ENCODE measurements at regions of chr2 and their contacts with region 1.

Region 1: DNA sequence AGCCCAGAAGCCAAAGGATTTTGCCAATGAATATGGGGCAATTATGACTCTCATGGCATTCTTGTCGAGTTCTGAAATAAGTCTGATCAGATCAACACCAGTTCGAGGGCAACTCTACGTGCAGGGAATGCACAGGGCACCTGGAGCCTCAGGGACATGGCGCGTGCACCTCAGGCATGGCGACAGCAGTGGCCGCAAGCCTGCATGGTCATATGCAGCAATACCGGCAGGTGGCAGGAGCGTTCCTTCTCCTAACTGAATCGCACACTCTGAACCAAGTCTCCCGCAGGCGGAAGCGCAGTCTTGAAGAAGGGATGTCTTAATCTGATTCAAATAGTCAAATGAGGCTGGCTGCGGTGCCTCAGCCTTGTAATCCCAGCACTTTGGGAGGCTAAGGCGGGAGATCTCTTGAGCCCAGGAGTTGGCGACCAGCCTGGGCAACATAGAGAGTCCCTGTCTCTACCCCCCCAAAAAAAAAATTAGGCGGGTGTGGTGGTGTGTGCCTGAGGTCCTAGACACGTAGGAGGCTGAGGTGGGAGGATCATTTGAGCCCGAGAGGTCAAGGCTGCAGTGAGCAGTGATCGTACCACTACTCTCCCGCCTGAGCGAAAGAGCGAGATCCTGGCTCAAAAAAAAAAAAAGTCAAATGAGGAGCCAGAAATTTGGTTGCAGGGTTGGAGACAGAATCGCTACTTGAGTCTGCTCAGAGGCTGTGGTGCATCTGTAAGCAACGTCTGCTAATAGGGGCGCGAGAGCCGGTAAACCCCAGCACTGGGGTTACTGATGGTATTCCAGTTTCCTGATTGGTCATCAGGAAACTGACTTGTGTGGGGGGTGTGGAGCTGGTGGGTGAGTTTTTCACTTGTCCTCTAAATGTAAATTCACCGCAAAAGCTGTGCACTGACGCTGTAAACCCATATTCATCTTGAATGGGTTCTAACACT is 28.8 kb downstream of the FHL2 start:
- DNase-seq: peak; percentile 93
- H3K4me3 ChIP-seq: no peak overlapping the region
- H3K27ac ChIP-seq: no peak overlapping the region
- H3K4me1 ChIP-seq: peaks cover 0 to 39% (median 28%) of the 10 kb centered on the region in 4 donors
- H3K27me3 ChIP-seq: no peaks in the 10 kb centered on the region
- CTCF ChIP-seq: peak; percentile 87 to 96 (median 90)
- EP300 ChIP-seq: no peak
- POLR2A ChIP-seq: no peak

Region 2: DNA sequence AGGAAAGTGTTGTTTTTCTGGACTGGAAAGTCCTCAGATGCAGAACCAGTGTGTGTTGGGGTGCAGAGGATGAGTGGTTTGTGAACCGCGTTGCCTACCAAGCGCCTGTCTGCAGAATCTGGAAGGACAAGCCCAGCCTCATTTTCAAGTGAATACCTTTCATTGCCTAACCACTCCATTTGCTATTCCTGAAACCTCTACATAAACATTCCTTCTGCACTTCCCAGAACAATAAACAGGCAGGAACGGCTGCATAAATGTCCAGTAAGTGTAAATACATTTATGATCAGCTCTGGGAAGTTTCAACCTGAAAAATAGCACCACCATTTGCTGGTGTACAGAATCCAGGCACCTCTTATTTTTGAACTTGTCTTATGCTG is 74.2 kb after region 1 on chr2:
- intact Hi-C with region 1: loop called (anchors 5 kb)
- DNase-seq: no peak
- H3K4me3 ChIP-seq: no peak overlapping the region
- H3K27ac ChIP-seq: peak overlapping the region in 2 of 4 donors; percentile 30 to 51
- H3K4me1 ChIP-seq: peaks cover 0 to 28% (median 17%) of the 10 kb centered on the region in 4 donors
- H3K27me3 ChIP-seq: peaks cover 0 to 9% (median 0%) of the 10 kb centered on the region in 3 donors
- CTCF ChIP-seq: peak in 3 of 4 experiments; percentile 14 to 36 (median 16)
- EP300 ChIP-seq: peak; percentile 64 to 92 (median 76)
- POLR2A ChIP-seq: no peak

Region 3: GRCh38 chr2:105521205-105521604 is 151.2 kb after region 1 on chr2:
- intact Hi-C with region 1: loop called (anchors 1 kb)
- DNase-seq: no peak
- H3K4me3 ChIP-seq: no peak overlapping the region
- H3K27ac ChIP-seq: no peak overlapping the region
- H3K4me1 ChIP-seq: peaks cover 0 to 15% (median 10%) of the 10 kb centered on the region in 4 donors
- H3K27me3 ChIP-seq: no peaks in the 10 kb centered on the region
- CTCF ChIP-seq: peak in 3 of 4 experiments; percentile 34 to 53 (median 52)
- EP300 ChIP-seq: no peak
- POLR2A ChIP-seq: no peak

Region 4: GRCh38 chr2:105541189-105542050 is 171.4 kb after region 1 on chr2:
- intact Hi-C with region 1: loop called (anchors 5 kb)
- DNase-seq: no peak
- H3K4me3 ChIP-seq: no peak overlapping the region
- H3K27ac ChIP-seq: no peak overlapping the region
- H3K4me1 ChIP-seq: no peaks in the 10 kb centered on the region
- H3K27me3 ChIP-seq: peaks cover 0 to 14% (median 0%) of the 10 kb centered on the region in 3 donors
- CTCF ChIP-seq: no peak
- EP300 ChIP-seq: no peak
- POLR2A ChIP-seq: no peak

Region 5: GRCh38 chr2:106030287-106031268 is 660.6 kb after region 1 on chr2:
- intact Hi-C with region 1: loop called (anchors 10 kb)
- DNase-seq: peak; percentile 86
- H3K4me3 ChIP-seq: peak overlapping the region in 1 of 4 donors; percentile 24
- H3K27ac ChIP-seq: peak overlapping the region; percentile 84 to 93 (median 92)
- H3K4me1 ChIP-seq: peaks cover 0 to 36% (median 25%) of the 10 kb centered on the region in 4 donors
- H3K27me3 ChIP-seq: no peaks in the 10 kb centered on the region
- CTCF ChIP-seq: no peak
- EP300 ChIP-seq: peak in 3 of 4 donors; percentile 33 to 66 (median 53)
- POLR2A ChIP-seq: no peak